Transverse colon (tissue), 4 donors: ENCODE measurements at regions of chr10 and their contacts with region 1.

Region 1: DNA sequence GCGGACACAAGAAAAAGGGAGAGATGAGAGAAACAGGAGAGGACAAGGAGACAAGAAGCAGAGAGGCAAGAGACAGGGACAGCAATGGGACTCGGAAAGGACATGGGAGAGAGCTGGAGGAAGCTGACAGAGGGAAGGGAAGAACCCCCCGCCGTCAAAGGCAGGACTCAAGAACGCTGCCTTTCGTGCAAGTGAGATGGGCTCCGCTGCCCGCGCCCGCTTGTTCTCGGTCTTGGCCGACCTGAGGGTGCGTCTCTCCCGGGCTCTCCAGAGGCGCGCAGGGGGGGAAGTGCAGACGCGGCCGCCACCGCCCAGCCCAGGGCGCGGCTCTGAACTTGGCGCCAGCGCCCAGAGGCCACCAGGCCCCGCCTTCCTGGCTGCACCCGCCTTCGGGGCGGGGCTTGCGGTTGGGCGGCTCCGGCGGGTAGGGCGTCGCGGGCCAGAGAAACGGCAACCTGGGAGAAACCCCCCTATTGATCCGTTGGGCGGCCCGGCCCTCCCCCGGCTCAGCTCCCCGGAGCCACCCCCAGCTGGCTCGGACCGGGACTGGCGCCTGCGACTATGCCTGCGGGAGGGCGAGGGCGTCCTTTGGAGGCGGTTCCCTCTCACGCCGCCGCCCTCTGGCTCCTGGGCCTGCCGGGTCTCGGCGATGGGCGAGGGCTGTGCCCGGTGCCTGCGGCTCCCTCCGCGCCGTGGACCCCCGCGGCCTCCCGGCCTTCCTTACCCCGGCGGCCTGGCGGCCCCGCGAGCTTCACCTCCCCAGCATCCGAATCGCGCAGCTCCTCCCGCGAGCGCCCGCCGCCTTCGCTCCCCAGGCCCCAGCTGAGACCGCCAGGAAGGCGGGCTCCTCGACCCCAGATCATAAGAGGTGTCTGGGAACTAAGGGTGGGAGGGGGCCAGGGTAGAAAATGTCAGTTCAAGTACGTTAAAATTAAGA is 2.2 kb upstream of the ANTXRL start:
- DNase-seq: peak; percentile 93
- H3K4me3 ChIP-seq: peak overlapping the region; percentile 35 to 72 (median 70)
- H3K27ac ChIP-seq: peak overlapping the region; percentile 76 to 88 (median 80)
- H3K4me1 ChIP-seq: peaks cover 15 to 27% (median 25%) of the 10 kb centered on the region in 4 donors
- H3K27me3 ChIP-seq: no peaks in the 10 kb centered on the region
- CTCF ChIP-seq: no peak
- EP300 ChIP-seq: no peak
- POLR2A ChIP-seq: peak; percentile 31

Region 2: DNA sequence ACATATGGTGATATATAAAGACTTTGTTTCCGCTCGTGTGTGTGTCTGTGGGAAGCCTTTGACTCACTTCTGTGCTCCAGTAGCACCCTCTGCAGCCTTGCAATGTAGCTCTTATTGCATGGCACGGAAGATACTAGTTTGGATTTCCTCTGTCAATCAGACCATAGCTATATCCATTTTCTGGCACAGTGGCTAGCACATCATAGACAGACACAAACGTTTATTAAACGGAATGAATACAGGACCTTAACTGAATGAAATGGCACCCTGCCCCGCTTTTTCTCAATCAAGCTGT is 502.7 kb after region 1 on chr10:
- in situ Hi-C with region 1: no loop called
- intact Hi-C with region 1: no loop called
- DNase-seq: no peak
- H3K4me3 ChIP-seq: peak overlapping the region; percentile 23 to 53 (median 46)
- H3K27ac ChIP-seq: peak overlapping the region in 3 of 4 donors; percentile 71 to 80 (median 77)
- H3K4me1 ChIP-seq: peaks cover 0 to 3% (median 1%) of the 10 kb centered on the region in 4 donors
- H3K27me3 ChIP-seq: no peaks in the 10 kb centered on the region
- CTCF ChIP-seq: no peak
- EP300 ChIP-seq: no peak
- POLR2A ChIP-seq: no peak

Region 3: GRCh38 chr10:47384148-47384921 is 1099.8 kb after region 1 on chr10 and contains the start of gene ZNF488:
- in situ Hi-C with region 1: loop called in 1 of 4 experiments (anchors 25 kb)
- intact Hi-C with region 1: no loop called
- DNase-seq: peak; percentile 87
- H3K4me3 ChIP-seq: peak within 1 kb of the TSS; percentile 58 to 95 (median 70)
- H3K27ac ChIP-seq: peak within 1 kb of the TSS; percentile 76 to 85 (median 82)
- H3K4me1 ChIP-seq: peaks cover 0 to 29% (median 16%) of the 10 kb centered on the region in 4 donors
- H3K27me3 ChIP-seq: no peaks in the 10 kb centered on the region
- CTCF ChIP-seq: no peak
- EP300 ChIP-seq: no peak
- POLR2A ChIP-seq: no peak
- total RNA-seq, gene ZNF488: 0.41 to 0.80 TPM in 2 of 4 donors, not detected in the others